ENCODE measurements at regions of chr4 and their contacts with region 1.

Region 1: DNA sequence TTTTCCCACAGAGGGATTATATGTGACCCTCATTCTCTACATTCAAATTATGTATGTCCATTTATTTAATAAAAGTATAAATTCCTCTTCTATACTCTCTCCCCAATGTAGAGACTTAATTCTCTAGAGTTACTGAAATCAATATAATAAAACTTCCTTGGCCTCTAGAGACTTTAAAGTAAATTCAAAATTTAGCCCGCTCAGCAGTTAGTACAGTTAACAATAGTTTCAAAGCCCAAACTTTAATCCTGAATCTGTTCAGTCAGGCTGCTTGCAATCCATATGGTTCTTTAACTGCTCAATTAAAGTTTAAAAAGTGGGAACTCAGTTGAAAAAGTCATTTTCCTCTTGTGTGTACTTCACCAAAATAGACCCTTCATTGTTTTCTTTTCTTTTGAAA is 2558.4 kb downstream of the ARAP2 start:
- DNase-seq: no peak
- ATAC-seq: no peak
- H3K4me3 ChIP-seq: no peak overlapping the region
- H3K27ac ChIP-seq: no peak overlapping the region
- H3K4me1 ChIP-seq: no peaks in the 10 kb centered on the region
- H3K27me3 ChIP-seq: no peaks in the 10 kb centered on the region
- CTCF ChIP-seq: no peak
- POLR2A ChIP-seq: no peak
- RAD21 ChIP-seq: no peak

Region 2: DNA sequence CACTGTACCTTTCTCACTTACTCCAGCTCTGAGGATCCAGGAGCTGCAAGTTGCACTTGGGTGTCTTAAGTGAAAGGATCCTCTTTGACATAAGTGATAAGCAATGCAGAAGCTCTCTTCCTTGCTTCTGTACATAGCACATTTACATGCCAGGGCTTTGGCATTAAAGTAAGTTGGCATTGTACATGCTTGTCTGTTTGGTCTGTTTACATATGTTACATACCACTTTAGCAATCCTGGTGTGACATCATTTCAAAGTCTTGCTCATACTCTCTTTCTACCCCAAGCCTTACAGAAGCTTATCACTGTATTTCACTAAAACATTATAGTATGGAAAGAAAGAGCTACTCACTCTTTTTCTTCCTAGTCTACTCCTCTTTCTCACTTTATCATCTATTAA is 10.1 kb after region 1 on chr4:
- CTCF ChIA-PET with region 1: no interaction called
- POLR2A ChIA-PET with region 1: no interaction called
- RAD21 ChIA-PET with region 1: no interaction called
- intact Hi-C with region 1: loop called (anchors 1 kb)
- DNase-seq: no peak
- ATAC-seq: no peak
- H3K4me3 ChIP-seq: no peak overlapping the region
- H3K27ac ChIP-seq: no peak overlapping the region
- H3K4me1 ChIP-seq: no peaks in the 10 kb centered on the region
- H3K27me3 ChIP-seq: no peaks in the 10 kb centered on the region
- CTCF ChIP-seq: no peak
- POLR2A ChIP-seq: no peak
- RAD21 ChIP-seq: no peak

Region 3: DNA sequence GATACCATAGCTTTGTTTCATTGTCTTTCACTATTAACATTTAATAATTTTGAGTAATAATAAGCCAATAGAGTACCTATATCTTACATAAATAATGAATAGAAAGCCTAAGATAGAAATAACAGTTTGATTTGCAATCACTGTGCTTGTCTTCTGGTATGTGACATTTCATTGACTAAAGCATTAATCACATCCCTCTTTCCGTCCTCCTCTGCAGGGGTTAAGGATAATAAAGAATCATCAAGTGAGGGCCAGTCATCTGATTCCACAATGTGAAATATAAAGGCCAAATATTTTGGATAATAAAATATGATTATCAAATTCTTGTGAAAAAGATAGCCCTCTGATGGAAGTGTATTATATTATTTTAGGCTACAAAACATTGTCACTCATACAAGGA is 485.0 kb after region 1 on chr4:
- CTCF ChIA-PET with region 1: no interaction called
- POLR2A ChIA-PET with region 1: no interaction called
- RAD21 ChIA-PET with region 1: no interaction called
- intact Hi-C with region 1: no loop called
- DNase-seq: no peak
- ATAC-seq: no peak
- H3K4me3 ChIP-seq: no peak overlapping the region
- H3K27ac ChIP-seq: no peak overlapping the region
- H3K4me1 ChIP-seq: peaks cover 0 to 36% of the 10 kb centered on the region in 2 experiments; a peak in 3 of 4 replicates
- H3K27me3 ChIP-seq: no peaks in the 10 kb centered on the region
- CTCF ChIP-seq: no peak
- POLR2A ChIP-seq: no peak
- RAD21 ChIP-seq: no peak

Region 4: GRCh38 chr4:34293459-34293858 is 607.5 kb after region 1 on chr4:
- CTCF ChIA-PET with region 1: no interaction called
- POLR2A ChIA-PET with region 1: no interaction called
- RAD21 ChIA-PET with region 1: no interaction called
- intact Hi-C with region 1: no loop called
- DNase-seq: peak; percentile 72
- ATAC-seq: peak; percentile 98
- H3K4me3 ChIP-seq: peak overlapping the region in 1 of 2 experiments; percentile 9; a peak in 1 of 4 replicates
- H3K27ac ChIP-seq: no peak overlapping the region
- H3K4me1 ChIP-seq: peaks cover 0 to 12% of the 10 kb centered on the region in 2 experiments; a peak in 2 of 4 replicates
- H3K27me3 ChIP-seq: no peaks in the 10 kb centered on the region
- CTCF ChIP-seq: no peak
- POLR2A ChIP-seq: no peak
- RAD21 ChIP-seq: 0 out of 2 replicates have a peak, but pooled peaks have one; percentile 26

Measured in HCT116 (cell line).